Activated T-helper 2 cell treated with anti-CD3 and anti-CD28 coated beads, Interferon-gamma antibody, Interleukin-2, Interleukin-4, amounts not matched to agents 10 μg/mL and 5 μg/mL and 100 μg/mL, durations not matched to agents 14 hours and 24 hours and 36 hours (primary cell): ENCODE measurements at regions of chr10 and their contacts with region 1.

Region 1: GRCh38 chr10:11823122-11823988 is at the start of gene PROSER2:
- DNase-seq: peak; percentile 13
- H3K4me3 Mint-ChIP-seq: peak within 1 kb of the TSS; percentile 66
- H3K27ac Mint-ChIP-seq: no peak within 1 kb of the TSS
- H3K4me1 Mint-ChIP-seq: peaks cover 5% of the 10 kb centered on the region
- H3K27me3 Mint-ChIP-seq: peaks cover 48% of the 10 kb centered on the region
- total RNA-seq, gene PROSER2: 0.37 and 0.39 TPM in 2 replicates

Region 2: DNA sequence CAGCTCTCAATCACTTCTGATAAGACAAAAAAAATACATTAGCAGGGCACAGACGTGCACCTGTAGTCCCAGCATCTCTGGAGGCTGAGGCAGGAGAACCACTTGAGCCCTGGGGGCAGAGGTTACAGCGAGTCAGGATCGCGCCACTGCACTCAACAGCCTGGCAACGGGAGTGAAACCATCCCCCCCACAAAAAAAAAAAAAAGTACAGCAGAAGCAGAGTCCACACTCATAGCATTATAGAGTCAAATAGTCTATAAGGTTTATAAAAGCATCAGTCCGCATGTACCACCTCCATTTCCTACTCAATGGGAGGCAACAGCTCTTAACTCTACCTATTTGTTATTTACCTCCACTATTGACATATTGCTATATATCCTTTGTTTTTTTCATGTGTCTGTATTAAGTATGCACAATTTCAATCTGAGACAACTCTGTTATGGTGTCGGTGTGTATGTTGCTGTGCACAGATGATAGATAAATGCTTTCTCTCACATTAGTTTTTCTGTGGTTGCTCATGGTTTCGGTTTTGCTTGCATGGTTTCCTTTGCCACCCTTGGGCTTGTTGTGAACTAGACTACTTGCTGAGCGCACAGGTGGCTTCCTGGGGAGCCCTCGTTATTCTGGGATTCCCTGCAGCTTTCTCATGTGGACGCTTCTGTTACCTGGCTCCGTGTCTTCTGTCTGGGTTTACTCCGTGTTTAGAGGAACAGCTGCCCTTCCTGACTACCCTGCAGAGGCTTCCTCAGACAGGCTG is 40.2 kb after region 1 on chr10:
- intact Hi-C with region 1: loop called (anchors 5 kb)
- DNase-seq: peak; percentile 69
- H3K4me3 Mint-ChIP-seq: no peak overlapping the region
- H3K27ac Mint-ChIP-seq: peak overlapping the region; percentile 48
- H3K4me1 Mint-ChIP-seq: peaks cover 21% of the 10 kb centered on the region
- H3K27me3 Mint-ChIP-seq: peaks cover 67% of the 10 kb centered on the region

Region 3: DNA sequence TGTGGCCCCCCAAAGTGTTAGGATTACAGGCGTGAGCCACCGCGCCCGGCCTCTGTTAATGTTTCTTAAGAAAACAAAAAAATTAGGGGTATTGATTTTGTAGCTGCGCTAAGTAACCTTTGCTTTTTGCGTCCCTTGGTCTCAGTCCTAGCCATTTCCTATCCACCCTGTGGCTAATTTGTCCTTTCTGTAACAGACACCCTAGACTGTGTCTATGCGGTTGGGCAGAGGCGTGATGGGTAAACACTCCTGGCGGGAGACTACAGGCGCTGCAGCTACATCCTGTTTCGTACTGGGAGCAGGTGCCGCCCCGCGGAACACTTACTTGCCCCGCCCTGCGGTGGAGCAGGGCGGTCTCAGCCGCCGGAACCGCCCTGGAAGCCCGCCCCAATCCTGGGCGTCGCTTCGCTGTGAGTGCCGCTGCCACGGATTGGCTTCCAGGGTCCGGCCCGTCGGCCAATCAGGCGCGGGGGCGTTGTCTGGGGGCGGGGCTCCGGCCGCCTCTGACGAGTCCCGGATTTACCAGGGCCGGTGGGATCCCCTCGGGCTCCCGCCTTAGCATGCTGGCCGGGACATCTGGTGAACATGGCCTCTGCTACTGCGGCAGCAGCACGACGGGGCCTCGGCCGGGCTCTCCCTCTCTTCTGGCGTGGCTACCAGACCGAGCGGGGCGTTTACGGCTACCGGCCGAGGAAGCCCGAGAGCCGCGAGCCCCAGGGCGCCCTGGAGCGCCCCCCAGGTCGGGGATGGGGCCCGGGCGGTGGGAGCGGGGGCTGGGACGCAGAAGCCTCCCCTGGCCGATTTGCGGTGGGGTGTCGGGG is 245.3 kb after region 1 on chr10 and contains the start of gene DHTKD1:
- intact Hi-C with region 1: no loop called
- DNase-seq: peak; percentile 99
- H3K4me3 Mint-ChIP-seq: peak within 1 kb of the TSS; percentile 77
- H3K27ac Mint-ChIP-seq: peak within 1 kb of the TSS; percentile 86
- H3K4me1 Mint-ChIP-seq: peaks cover 16% of the 10 kb centered on the region
- H3K27me3 Mint-ChIP-seq: peaks cover 2% of the 10 kb centered on the region
- total RNA-seq, gene DHTKD1: 20.6 and 21.1 TPM in 2 replicates